Calu3 (cell line): ENCODE measurements at regions of chr15 and their contacts with region 1.

Region 1: GRCh38 chr15:41811432-41812195 is 16.3 kb upstream of the JMJD7 start:
- DNase-seq: peak; percentile 76
- H3K4me3 Mint-ChIP-seq: no peak overlapping the region
- H3K27ac Mint-ChIP-seq: no peak overlapping the region
- H3K4me1 Mint-ChIP-seq: no peaks in the 10 kb centered on the region
- H3K27me3 Mint-ChIP-seq: no peaks in the 10 kb centered on the region
- CTCF ChIP-seq: peak; percentile 44

Region 2: GRCh38 chr15:41557673-41558399 is 253.8 kb before region 1 on chr15:
- CTCF ChIA-PET with region 1: no interaction called
- intact Hi-C with region 1: no loop called
- DNase-seq: peak; percentile 54
- H3K4me3 Mint-ChIP-seq: peak overlapping the region; percentile 77
- H3K27ac Mint-ChIP-seq: peak overlapping the region; percentile 66
- H3K4me1 Mint-ChIP-seq: no peaks in the 10 kb centered on the region
- H3K27me3 Mint-ChIP-seq: peaks cover 22% of the 10 kb centered on the region
- CTCF ChIP-seq: no peak

Region 3: DNA sequence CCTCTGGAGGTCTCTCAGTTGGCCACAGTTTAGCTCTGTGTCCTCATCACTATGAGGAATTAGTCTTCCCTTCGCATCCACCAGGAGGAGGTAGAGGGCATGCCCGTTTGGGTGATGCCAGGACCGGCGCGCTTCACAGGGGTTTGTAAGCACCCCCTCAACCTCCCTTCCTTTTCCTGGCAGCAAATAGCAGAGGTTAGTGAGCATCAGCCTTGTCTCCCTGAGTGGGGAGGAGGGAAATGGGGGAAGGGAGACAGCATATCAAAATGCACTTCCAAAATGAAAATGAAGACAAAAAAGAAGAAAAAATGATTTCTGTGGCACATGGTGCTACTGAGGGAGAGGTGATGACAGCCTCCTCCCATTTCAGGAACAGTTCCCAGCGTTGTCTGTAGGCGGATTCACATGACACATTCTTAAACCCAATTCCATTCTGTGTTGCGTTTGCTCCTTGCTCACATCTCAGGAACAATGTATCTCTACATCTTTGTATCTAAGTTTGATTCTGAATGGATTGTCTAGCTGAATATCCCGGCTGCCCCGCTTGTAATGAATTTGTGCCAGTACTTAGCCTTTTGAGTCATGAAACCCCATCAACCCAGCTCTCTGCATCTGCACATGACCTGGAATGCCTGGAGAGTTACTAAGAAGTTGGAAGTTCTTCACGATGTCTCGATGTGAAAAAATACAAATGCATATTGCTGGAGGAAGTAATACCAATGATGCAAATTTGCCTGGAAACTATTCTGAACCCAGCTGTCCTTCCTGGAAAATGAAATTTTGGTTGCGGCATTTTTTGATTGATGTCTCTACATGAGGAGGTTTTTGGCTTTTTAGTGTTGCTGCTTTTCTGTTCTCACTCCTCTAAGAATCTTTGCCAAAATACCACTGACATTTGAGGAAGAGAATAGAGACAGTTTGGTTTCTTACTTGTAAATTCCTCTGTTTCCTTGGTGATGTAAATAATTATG is 207.4 kb before region 1 on chr15:
- CTCF ChIA-PET with region 1: interaction called, 3 read pairs
- intact Hi-C with region 1: loop called (anchors 5 kb)
- DNase-seq: peak; percentile 56
- H3K4me3 Mint-ChIP-seq: no peak overlapping the region
- H3K27ac Mint-ChIP-seq: no peak overlapping the region
- H3K4me1 Mint-ChIP-seq: peaks cover 8% of the 10 kb centered on the region
- H3K27me3 Mint-ChIP-seq: peaks cover 28% of the 10 kb centered on the region
- CTCF ChIP-seq: peak; percentile 40

Region 4: DNA sequence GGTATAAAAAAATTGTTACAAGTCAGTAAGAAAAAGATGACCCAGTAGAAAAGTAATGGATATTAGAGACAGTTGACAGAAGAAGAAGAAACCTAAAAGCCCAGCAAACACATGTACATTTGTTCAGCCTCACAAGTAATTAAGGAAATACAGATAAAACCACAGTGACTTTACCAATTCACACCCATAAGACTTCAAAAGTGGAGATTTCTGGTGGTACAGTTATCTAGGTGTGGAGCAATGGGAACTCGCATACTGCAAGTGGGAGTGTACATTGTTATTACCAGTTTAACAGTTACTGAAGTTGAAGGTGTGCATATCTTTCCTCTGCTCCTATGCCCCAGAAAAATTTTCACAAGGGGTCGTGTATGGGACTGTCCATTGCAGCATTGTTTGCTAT is 55.4 kb before region 1 on chr15:
- CTCF ChIA-PET with region 1: no interaction called
- intact Hi-C with region 1: no loop called
- DNase-seq: no peak
- H3K4me3 Mint-ChIP-seq: no peak overlapping the region
- H3K27ac Mint-ChIP-seq: no peak overlapping the region
- H3K4me1 Mint-ChIP-seq: no peaks in the 10 kb centered on the region
- H3K27me3 Mint-ChIP-seq: no peaks in the 10 kb centered on the region
- CTCF ChIP-seq: no peak

Region 5: GRCh38 chr15:41774062-41774881 is 37.3 kb before region 1 on chr15 and contains the start of gene MAPKBP1:
- CTCF ChIA-PET with region 1: interaction called, 15 read pairs
- intact Hi-C with region 1: loop called (anchors 1 kb)
- DNase-seq: peak; percentile 93
- H3K4me3 Mint-ChIP-seq: peak within 1 kb of the TSS; percentile 82
- H3K27ac Mint-ChIP-seq: peak within 1 kb of the TSS; percentile 71
- H3K4me1 Mint-ChIP-seq: no peaks in the 10 kb centered on the region
- H3K27me3 Mint-ChIP-seq: no peaks in the 10 kb centered on the region
- CTCF ChIP-seq: no peak
- total RNA-seq, gene MAPKBP1: 9.9 and 11.3 TPM in 2 replicates

Region 6: DNA sequence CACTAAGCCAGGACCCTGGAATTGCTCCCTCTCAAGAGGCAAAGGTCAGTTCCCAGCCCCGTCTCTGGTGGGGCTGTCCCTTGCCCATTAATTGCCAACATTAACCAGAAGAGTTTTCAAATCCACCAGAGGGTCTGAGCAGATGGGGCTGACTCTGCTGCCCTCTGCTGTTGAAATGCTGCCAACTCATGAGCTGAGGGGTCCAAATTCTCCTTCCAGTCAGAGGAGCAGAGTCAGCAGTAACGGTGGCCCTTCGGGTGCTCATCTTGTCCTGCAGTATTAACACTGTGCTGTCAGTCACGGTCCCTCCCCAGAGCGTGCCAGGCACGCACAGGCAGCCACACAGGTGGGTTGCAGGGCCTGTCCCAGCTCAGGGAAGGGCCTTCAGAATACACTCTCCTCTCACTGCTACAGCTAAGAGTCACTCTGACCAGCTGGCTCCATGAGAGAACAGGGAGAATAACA is 93.0 kb after region 1 on chr15:
- CTCF ChIA-PET with region 1: interaction called, 3 read pairs
- intact Hi-C with region 1: loop called (anchors 10 kb)
- DNase-seq: peak; percentile 45
- H3K4me3 Mint-ChIP-seq: no peak overlapping the region
- H3K27ac Mint-ChIP-seq: no peak overlapping the region
- H3K4me1 Mint-ChIP-seq: no peaks in the 10 kb centered on the region
- H3K27me3 Mint-ChIP-seq: no peaks in the 10 kb centered on the region
- CTCF ChIP-seq: peak; percentile 55

Region 7: DNA sequence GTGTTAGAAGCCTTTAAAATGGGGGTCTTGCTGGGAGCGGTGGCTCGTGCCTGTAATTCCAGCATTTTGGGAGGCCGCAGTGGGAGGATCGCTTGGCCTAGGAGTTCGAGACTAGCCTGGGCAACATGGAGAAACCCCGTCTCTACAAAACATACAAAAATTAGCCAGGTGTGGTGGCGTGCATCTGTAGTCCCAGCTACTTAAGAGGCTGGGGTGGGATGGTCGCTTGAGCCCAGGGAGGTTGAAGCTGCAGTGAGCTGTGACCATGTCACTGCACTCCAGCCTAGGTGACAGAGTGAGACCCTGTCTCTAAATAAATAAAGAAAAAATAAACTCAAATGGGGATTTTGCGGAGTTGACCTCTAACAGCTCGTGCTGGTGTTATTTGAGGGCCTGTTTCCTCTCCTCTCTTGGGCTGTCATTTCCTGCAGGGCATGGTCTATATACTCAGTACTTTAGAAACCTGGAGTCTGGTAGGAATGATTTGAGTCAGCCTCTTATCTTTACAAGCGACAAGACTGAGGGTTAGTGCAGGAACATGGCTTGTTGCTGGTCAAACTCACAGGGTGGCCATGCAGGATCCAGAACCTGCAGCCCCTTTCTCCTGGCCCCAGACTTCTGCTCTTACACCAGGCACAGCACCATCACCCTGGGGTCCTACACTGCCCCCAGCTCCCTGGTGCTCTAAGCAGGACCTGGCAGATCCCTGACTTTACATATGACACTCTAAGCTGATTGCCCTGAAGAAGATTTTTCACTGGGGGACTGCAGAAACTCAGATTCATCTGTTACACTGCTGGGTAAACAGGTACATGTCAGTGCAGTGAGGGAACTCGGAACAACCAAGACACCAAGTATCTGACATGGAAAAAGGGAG is 145.6 kb after region 1 on chr15:
- CTCF ChIA-PET with region 1: no interaction called
- intact Hi-C with region 1: no loop called
- DNase-seq: no peak
- H3K4me3 Mint-ChIP-seq: no peak overlapping the region
- H3K27ac Mint-ChIP-seq: no peak overlapping the region
- H3K4me1 Mint-ChIP-seq: peaks cover 8% of the 10 kb centered on the region
- H3K27me3 Mint-ChIP-seq: no peaks in the 10 kb centered on the region
- CTCF ChIP-seq: no peak